Uterus (tissue), 4 donors: ENCODE measurements at regions of chr11 and their contacts with region 1.

Region 1: DNA sequence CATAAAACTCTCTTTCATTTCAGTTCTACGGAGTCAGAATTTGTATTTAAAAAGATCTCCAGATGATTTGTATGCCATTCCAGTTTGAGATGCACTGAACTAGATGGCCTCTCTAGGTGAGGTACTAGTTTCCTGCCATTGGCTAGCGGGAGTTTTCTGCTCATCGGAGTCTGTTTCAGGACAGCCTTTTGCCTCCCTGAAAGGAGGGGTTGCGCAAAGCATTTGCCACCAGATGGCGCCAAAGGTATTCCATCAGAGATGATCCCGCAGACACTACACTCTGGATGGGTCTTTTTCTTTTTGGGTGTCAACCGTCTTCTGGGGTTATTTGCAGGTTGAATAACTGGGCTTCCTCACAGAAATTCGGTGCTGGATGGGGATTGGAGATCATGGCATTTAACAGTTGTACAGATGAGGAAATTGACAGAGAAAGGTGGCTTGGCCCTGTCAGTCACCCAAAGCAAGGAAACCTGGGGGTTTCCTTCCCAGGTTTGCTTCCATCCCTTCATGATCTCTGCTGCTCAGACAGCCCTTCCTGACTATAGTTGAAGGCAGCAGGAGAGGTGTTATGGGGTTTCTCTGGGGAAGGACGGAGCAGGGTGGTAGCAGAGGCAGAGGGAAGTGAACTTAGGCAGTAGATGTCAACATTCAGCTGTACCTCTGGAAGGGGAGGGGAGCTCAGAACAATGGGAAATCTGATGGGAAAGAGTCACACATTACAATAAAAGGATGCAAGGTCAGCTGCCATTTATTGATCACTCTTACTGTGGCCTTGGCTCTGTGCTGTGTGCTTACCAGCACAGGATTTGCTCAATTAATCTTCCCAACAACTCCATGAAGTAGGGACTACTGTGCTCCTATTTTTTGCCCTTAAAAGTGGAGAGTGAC is 81.6 kb downstream of the CCDC81 start:
- DNase-seq: peak; percentile 88 to 92
- H3K4me3 ChIP-seq: no peak overlapping the region
- H3K27ac ChIP-seq: peak overlapping the region; percentile 37 to 73
- H3K4me1 ChIP-seq: peaks cover 10% of the 10 kb centered on the region in 2 donors
- H3K27me3 ChIP-seq: no peaks in the 10 kb centered on the region
- CTCF ChIP-seq: peak; percentile 89 to 98 (median 90)
- POLR2A ChIP-seq: no peak

Region 2: DNA sequence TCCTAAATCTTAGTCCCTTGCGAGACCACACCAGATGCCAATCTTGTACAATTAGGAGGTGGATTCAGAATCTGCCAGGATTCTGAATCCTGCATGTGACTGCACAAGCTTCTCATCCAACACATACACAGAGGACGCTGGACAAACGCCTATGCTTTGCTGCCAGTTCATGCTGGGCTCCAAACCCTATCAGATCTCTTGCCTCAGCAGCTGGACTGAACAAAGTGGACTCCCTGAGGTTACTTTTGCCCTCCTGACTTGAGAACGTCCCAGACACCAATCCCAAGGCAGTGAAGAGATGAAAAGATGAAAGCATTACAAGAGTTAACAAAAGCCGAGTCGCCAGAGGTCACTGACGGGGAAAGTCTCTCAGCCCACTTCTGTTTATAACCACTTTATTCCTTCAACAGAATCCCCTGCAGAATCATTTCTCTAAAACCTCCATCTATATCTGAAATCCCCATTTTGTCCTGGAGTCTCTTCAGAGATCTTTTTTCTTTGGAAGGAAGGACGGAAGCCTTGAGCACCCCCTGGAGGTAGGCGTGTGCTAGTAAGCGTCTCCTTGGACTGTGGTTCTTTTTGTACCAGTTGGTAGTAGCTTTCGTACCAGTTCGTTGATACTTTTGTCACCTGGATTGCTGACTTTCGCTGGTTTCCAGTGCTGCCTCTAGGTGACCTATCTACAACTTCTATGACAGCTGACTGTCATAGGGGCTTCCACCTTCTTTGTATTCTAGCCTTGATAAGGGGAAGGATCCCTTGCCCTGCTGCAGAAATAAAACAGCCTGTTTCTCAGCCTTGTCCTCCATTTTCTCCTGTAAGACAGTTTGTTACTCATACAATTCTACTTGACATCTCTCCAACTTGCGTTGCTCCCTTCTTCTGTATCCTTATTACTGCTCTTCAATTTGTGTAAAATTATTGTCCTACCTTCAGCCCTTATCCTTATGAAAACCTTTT is 237.9 kb before region 1 on chr11:
- intact Hi-C with region 1: no loop called
- DNase-seq: peak; percentile 62 to 68
- H3K4me3 ChIP-seq: no peak overlapping the region
- H3K27ac ChIP-seq: no peak overlapping the region
- H3K4me1 ChIP-seq: no peaks in the 10 kb centered on the region
- H3K27me3 ChIP-seq: no peaks in the 10 kb centered on the region
- CTCF ChIP-seq: peak; percentile 82 to 86 (median 84)
- POLR2A ChIP-seq: no peak

Region 3: GRCh38 chr11:86608251-86608799 is 152.0 kb after region 1 on chr11:
- intact Hi-C with region 1: loop called (anchors 5 kb)
- DNase-seq: peak; percentile 71 to 83
- H3K4me3 ChIP-seq: no peak overlapping the region
- H3K27ac ChIP-seq: peak overlapping the region; percentile 55 to 84
- H3K4me1 ChIP-seq: peaks cover 0 to 15% of the 10 kb centered on the region in 2 donors
- H3K27me3 ChIP-seq: no peaks in the 10 kb centered on the region
- CTCF ChIP-seq: peak; percentile 85 to 92 (median 88)
- POLR2A ChIP-seq: no peak

Region 4: GRCh38 chr11:86818466-86819192 is 362.3 kb after region 1 on chr11:
- intact Hi-C with region 1: loop called (anchors 5 kb)
- DNase-seq: no peak
- H3K4me3 ChIP-seq: no peak overlapping the region
- H3K27ac ChIP-seq: peak overlapping the region; percentile 77 to 96
- H3K4me1 ChIP-seq: peaks cover 0 to 9% of the 10 kb centered on the region in 2 donors
- H3K27me3 ChIP-seq: no peaks in the 10 kb centered on the region
- CTCF ChIP-seq: peak; percentile 64 to 88 (median 86)
- POLR2A ChIP-seq: no peak